Activated CD8-positive, alpha-beta T cell treated with anti-CD3 and anti-CD28 coated beads for 36 hours (primary cell): ENCODE measurements at regions of chr1 and their contacts with region 1.

Region 1: GRCh38 chr1:205255941-205256780 is 28.4 kb downstream of the TMCC2 start:
- DNase-seq: peak; percentile 93
- ATAC-seq: peak; percentile 97
- H3K4me3 Mint-ChIP-seq: no peak overlapping the region
- H3K27ac Mint-ChIP-seq: no peak overlapping the region
- H3K4me1 Mint-ChIP-seq: peaks cover 9% of the 10 kb centered on the region
- H3K27me3 Mint-ChIP-seq: no peaks in the 10 kb centered on the region
- CTCF ChIP-seq: peak; percentile 97

Region 2: DNA sequence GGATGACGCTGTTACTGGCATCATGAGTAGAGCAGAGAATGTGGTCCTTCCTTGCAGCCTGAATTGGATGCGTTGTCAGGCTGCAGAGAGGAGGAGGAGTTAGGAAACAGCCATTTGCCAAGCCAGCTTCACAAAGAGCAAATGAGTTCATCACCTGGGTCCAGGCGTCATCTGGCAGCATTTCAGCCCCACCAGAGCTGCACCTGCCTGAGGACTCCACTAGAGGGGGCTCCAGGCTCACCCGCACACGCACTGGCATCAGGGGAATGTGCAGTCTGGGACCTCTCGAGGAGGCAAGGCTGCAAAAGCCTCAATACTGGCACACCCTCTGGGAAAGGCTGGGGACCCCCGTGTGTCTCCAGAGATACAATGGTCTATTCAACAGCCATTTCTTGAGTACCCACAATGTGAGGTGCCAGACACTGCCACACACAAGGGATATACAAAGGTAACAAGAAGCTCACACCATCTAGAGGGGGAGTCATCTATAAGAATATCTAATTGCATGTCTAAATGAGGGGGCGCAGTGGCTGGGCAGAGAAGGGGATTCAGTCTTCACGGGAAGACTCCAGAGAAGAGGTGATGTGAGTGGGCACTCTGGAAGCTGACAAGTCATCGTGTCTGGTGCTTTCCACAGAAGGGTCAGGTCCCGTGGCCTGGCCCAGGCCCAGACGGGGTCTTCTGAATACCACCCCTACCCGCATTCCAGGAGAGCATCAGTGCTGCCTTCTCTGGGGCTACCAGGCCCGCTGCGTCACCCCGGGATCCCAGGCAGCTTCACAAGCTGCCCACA is 266.7 kb before region 1 on chr1:
- CTCF ChIA-PET with region 1: interaction called, 29 read pairs
- POLR2A ChIA-PET with region 1: no interaction called
- intact Hi-C with region 1: no loop called
- DNase-seq: peak; percentile 74
- ATAC-seq: peak; percentile 98
- H3K4me3 Mint-ChIP-seq: no peak overlapping the region
- H3K27ac Mint-ChIP-seq: no peak overlapping the region
- H3K4me1 Mint-ChIP-seq: peaks cover 12% of the 10 kb centered on the region
- H3K27me3 Mint-ChIP-seq: no peaks in the 10 kb centered on the region
- CTCF ChIP-seq: peak; percentile 89

Region 3: GRCh38 chr1:205111354-205111753 is 144.8 kb before region 1 on chr1:
- CTCF ChIA-PET with region 1: interaction called, 10 read pairs
- POLR2A ChIA-PET with region 1: no interaction called
- intact Hi-C with region 1: no loop called
- DNase-seq: no peak
- ATAC-seq: no peak
- H3K4me3 Mint-ChIP-seq: no peak overlapping the region
- H3K27ac Mint-ChIP-seq: no peak overlapping the region
- H3K4me1 Mint-ChIP-seq: peaks cover 14% of the 10 kb centered on the region
- H3K27me3 Mint-ChIP-seq: no peaks in the 10 kb centered on the region
- CTCF ChIP-seq: no peak

Region 4: DNA sequence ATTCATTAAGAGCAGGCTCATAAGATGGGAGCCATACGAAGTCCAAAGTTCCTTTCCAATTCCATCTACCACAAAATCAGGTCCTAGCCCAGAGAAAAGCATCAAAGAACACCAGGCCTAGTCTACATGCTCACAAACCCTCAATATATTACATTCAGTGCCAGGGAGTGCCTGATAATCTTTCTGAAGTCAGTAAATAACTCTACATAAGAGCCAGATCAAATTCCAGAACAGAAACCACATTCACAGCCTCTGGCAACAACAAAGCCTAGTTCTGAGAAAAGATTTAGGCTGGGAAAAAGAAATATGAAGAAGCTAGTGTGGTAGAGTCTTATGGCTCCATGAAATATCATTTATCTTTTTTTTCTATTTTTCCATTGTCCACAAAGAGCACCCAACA is 93.9 kb before region 1 on chr1:
- CTCF ChIA-PET with region 1: interaction called, 12 read pairs
- POLR2A ChIA-PET with region 1: interaction called, 3 read pairs
- intact Hi-C with region 1: no loop called
- DNase-seq: no peak
- ATAC-seq: no peak
- H3K4me3 Mint-ChIP-seq: no peak overlapping the region
- H3K27ac Mint-ChIP-seq: no peak overlapping the region
- H3K4me1 Mint-ChIP-seq: peaks cover 4% of the 10 kb centered on the region
- H3K27me3 Mint-ChIP-seq: no peaks in the 10 kb centered on the region
- CTCF ChIP-seq: no peak

Region 5: DNA sequence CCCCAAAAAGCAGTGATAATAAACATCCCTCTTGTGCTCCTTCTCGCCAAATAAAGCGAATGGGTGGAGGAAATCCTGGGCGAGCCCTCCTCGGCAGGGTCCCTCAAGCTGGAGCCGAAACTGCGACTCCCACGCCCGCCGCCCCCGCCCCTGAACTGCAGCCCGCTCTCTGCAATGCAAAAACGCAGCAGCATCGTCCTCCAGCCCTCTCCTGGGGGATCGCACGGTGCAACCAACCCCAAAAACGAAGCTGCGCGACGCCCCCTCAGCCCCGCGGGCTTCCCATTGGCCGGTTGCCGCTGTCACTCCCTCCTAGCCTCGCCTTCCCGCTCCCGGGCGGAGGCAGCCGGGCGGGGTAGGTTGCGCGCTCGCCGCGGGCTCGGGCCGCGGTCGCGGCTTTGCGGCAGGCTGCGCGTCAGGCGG is 28.6 kb before region 1 on chr1 and contains the start of gene TMCC2:
- CTCF ChIA-PET with region 1: interaction called, 411 read pairs
- POLR2A ChIA-PET with region 1: interaction called, 21 read pairs
- intact Hi-C with region 1: loop called (anchors 2 kb)
- DNase-seq: peak; percentile 93
- ATAC-seq: peak; percentile 87
- H3K4me3 Mint-ChIP-seq: peak within 1 kb of the TSS; percentile 89
- H3K27ac Mint-ChIP-seq: peak within 1 kb of the TSS; percentile 93
- H3K4me1 Mint-ChIP-seq: peaks cover 42% of the 10 kb centered on the region
- H3K27me3 Mint-ChIP-seq: peaks cover 19% of the 10 kb centered on the region
- CTCF ChIP-seq: no peak
- total RNA-seq, gene TMCC2: 6.6 to 7.1 TPM

Region 6: GRCh38 chr1:205284343-205285144 is 28.4 kb after region 1 on chr1:
- CTCF ChIA-PET with region 1: interaction called, 14 read pairs
- POLR2A ChIA-PET with region 1: no interaction called
- intact Hi-C with region 1: no loop called
- DNase-seq: peak; percentile 96
- ATAC-seq: peak; percentile 75
- H3K4me3 Mint-ChIP-seq: peak overlapping the region; percentile 57
- H3K27ac Mint-ChIP-seq: peak overlapping the region; percentile 66
- H3K4me1 Mint-ChIP-seq: peaks cover 74% of the 10 kb centered on the region
- H3K27me3 Mint-ChIP-seq: no peaks in the 10 kb centered on the region
- CTCF ChIP-seq: no peak

Region 7: GRCh38 chr1:205346956-205347576 is 90.9 kb after region 1 on chr1:
- CTCF ChIA-PET with region 1: no interaction called
- POLR2A ChIA-PET with region 1: no interaction called
- intact Hi-C with region 1: no loop called
- DNase-seq: no peak
- ATAC-seq: no peak
- H3K4me3 Mint-ChIP-seq: no peak overlapping the region
- H3K27ac Mint-ChIP-seq: no peak overlapping the region
- H3K4me1 Mint-ChIP-seq: peaks cover 6% of the 10 kb centered on the region
- H3K27me3 Mint-ChIP-seq: peaks cover 39% of the 10 kb centered on the region
- CTCF ChIP-seq: no peak

Region 8: DNA sequence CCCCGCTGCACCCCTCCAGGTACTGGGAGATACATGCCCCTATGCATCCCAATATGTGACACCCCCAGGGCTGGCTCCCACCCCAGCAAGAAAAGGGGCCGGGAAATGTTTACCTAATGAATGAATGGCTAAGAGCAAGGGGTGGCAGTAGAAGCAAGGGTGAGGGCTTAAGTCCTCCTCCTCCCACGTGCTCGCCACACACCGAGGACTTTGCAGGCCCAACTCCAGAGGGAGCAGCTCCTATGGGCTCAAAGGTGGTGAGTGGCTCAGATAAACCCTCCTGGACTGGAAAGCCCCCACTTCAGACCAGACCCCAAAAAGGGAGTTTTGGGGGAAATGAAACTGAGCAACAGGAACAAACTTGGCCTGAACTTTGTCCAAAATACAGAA is 412.8 kb after region 1 on chr1:
- CTCF ChIA-PET with region 1: no interaction called
- POLR2A ChIA-PET with region 1: no interaction called
- intact Hi-C with region 1: no loop called
- DNase-seq: no peak
- ATAC-seq: peak; percentile 31
- H3K4me3 Mint-ChIP-seq: no peak overlapping the region
- H3K27ac Mint-ChIP-seq: no peak overlapping the region
- H3K4me1 Mint-ChIP-seq: peaks cover 7% of the 10 kb centered on the region
- H3K27me3 Mint-ChIP-seq: peaks cover 9% of the 10 kb centered on the region
- CTCF ChIP-seq: no peak